Activated naive CD4-positive, alpha-beta T cell treated with anti-CD3 and anti-CD28 coated beads for 36 hours (primary cell): ENCODE measurements at regions of chr13 and their contacts with region 1.

Region 1: DNA sequence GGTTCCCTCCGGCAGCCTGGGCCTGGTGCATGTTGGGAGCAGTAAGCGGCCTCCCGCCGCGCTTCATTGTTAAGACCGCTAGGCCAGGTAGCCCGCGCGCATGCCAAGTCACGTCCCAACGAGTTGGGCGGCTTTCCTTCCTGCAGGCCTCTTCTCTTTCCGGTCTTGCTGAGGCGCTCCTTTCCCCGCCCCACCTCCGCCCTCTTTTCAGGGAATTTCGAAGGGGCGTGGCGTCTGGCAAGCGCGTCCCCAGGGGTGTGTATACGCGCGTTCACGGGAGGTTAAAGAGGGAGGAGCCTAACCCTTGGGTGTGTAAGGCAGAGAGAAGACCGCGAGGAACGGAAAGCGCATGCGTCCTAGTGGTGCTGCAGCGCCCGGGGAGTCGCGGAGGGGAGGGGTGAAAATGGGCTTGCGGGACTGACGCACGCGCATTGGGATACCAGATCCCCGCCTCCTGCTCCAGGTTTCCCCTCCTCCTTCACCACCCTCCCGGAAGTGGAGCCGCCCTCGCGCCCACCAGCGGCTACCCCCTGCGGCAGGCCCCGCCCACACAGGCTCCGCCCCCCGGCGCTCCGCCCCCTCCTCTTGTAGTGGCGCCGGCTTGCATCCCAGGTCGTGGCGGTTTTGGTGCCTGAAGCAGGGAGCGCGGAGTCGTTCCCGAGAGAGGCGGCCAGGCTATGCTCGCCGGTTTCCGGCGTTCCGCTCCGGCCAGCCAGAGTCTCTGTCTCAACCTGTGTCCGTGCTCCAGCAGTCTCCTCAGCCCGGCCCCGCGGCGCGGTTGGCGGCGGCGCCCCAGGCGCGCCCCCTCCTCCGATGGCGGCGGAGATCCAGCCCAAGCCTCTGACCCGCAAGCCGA is at the start of gene WDFY2:
- DNase-seq: peak; percentile 99
- H3K4me3 Mint-ChIP-seq: peak within 1 kb of the TSS; percentile 88
- H3K27ac Mint-ChIP-seq: peak within 1 kb of the TSS; percentile 95
- H3K4me1 Mint-ChIP-seq: peaks cover 33% of the 10 kb centered on the region
- H3K27me3 Mint-ChIP-seq: no peaks in the 10 kb centered on the region
- total RNA-seq, gene WDFY2: 8.3 to 11.3 TPM

Region 2: GRCh38 chr13:51502153-51502651 is 81.9 kb before region 1 on chr13:
- CTCF ChIA-PET with region 1: no interaction called
- intact Hi-C with region 1: loop called (anchors 1 kb)
- DNase-seq: peak; percentile 66
- H3K4me3 Mint-ChIP-seq: no peak overlapping the region
- H3K27ac Mint-ChIP-seq: no peak overlapping the region
- H3K4me1 Mint-ChIP-seq: peaks cover 23% of the 10 kb centered on the region
- H3K27me3 Mint-ChIP-seq: no peaks in the 10 kb centered on the region

Region 3: DNA sequence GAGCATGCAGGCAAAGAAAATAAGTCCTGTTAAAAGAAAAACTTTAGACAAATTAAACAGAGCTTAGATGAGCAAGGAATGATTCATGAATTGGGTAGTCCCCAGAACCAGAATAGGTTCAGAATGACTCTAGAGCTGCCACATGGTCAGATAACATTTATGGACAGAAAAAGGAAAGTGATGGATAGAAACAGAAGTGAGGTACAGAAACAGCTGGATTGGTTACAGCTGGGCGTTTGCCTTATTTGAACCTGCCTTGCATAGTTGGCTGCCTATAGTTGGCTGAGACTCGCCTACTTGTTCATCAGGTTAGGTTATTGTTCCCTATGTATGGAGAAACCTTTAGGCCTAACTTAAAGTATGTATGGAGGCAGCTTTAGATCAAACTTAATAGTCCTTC is 35.5 kb after region 1 on chr13:
- CTCF ChIA-PET with region 1: interaction called, 10 read pairs
- intact Hi-C with region 1: loop called (anchors 1 kb)
- DNase-seq: peak; percentile 54
- H3K4me3 Mint-ChIP-seq: no peak overlapping the region
- H3K27ac Mint-ChIP-seq: no peak overlapping the region
- H3K4me1 Mint-ChIP-seq: peaks cover 42% of the 10 kb centered on the region
- H3K27me3 Mint-ChIP-seq: no peaks in the 10 kb centered on the region

Region 4: DNA sequence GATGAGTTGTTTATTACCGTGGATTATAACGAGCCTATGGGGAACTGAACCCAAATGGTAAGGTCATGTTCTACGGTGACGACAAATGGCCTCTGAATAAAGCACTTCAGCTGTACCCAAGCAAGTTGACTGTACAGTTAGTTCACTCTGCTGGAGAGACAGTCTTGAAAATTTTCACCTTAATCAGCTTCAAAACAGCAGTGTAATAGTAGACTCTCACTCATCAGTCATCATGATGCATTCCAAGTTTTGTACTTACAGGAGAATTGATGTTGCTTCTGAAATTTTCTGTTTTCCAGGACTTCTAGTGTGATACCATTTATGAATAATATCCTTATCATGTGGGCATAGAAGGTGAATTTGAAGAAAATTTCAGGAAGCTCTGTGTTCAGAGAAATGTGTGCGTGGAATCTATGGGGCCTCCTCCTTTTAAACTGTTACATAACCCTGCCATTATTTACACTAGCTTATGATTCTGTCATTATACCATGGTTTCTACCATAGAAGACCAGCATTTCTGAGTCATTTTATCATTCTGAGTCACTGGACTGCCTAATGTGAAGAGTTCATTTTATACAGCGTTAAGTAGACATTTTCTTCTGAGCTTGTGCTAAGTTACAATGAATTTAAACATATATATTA is 97.1 kb after region 1 on chr13:
- CTCF ChIA-PET with region 1: interaction called, 3 read pairs
- intact Hi-C with region 1: loop called (anchors 2 kb)
- DNase-seq: no peak
- H3K4me3 Mint-ChIP-seq: no peak overlapping the region
- H3K27ac Mint-ChIP-seq: no peak overlapping the region
- H3K4me1 Mint-ChIP-seq: peaks cover 13% of the 10 kb centered on the region
- H3K27me3 Mint-ChIP-seq: no peaks in the 10 kb centered on the region

Region 5: DNA sequence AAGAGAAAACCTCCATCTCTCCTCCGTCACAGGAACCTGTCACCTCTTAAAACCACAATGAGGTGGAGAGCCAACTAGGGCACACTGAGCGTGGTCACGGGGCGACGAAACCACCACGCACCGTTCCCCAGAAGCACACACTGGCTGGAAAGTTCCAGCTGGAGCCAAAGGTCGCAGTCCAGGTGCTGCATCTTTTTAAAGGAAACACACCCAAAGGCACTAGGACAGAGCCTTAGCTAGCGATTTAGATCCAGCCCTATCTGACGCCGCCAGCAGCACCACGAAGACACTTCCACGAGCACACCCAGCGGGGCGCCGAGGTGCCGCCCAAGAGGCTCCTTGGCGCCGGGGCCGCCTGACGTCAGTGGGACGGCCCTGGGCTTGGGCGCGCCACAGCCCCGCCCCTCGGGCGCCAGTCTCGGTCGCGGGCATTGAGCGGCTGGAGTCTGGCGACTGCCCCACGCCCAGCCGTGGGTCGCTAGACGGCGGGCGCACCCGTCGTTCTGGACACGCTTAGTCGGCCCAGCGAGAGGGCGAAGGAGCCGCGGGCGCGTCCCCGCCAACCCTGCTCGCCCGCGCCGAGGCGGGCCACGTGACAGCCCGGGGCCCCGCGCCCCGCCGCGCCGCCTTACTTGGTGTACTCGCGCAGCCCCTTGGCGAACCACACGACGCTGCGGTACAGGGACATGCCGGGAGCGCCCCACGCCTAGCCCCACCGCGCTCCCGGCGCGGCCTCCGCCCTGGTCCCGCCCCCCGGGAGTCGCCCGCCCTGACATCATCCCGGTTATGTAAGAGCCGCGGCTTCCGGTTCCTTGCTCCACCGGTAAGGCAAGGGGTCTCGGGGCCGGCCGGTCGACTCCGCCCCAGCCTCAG is 219.6 kb after region 1 on chr13 and contains the start of gene DHRS12:
- CTCF ChIA-PET with region 1: no interaction called
- intact Hi-C with region 1: loop called (anchors 1 kb)
- DNase-seq: peak; percentile 89
- H3K4me3 Mint-ChIP-seq: peak within 1 kb of the TSS; percentile 92
- H3K27ac Mint-ChIP-seq: peak within 1 kb of the TSS; percentile 98
- H3K4me1 Mint-ChIP-seq: peaks cover 57% of the 10 kb centered on the region
- H3K27me3 Mint-ChIP-seq: no peaks in the 10 kb centered on the region
- total RNA-seq, gene DHRS12: 4.1 to 4.9 TPM

Region 6: GRCh38 chr13:52194184-52194868 is 610.2 kb after region 1 on chr13:
- CTCF ChIA-PET with region 1: no interaction called
- intact Hi-C with region 1: loop called (anchors 1 kb)
- DNase-seq: peak; percentile 90
- H3K4me3 Mint-ChIP-seq: peak overlapping the region; percentile 98
- H3K27ac Mint-ChIP-seq: peak overlapping the region; percentile 97
- H3K4me1 Mint-ChIP-seq: peaks cover 30% of the 10 kb centered on the region
- H3K27me3 Mint-ChIP-seq: no peaks in the 10 kb centered on the region